GM12878 (cell line): ENCODE measurements at regions of chr3 and their contacts with region 1.

Region 1: DNA sequence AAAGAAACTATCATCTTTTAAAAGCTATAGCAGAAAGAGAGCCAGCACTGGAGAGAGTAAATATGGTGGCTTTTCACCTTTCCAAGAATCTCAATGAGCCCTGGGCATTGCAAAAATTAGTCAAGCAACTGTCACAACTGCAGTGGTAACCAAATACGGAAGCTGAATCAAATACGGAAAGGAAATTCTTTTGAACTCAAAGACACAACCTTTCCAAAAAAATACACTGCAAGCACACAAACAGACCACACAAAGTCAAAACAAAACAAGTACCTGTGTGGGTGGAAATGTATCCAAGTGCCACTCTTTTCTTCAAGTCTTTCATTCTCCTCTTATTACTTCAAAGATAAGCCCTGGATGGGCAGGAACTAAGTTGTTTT is 17.6 kb downstream of the VGLL4 start:
- DNase-seq: peak; percentile 72
- ATAC-seq: peak; percentile 84
- H3K4me3 ChIP-seq: peak overlapping the region; percentile 38; the same call in 1 of the 2 replicates
- H3K27ac ChIP-seq: peak overlapping the region; percentile 68; the same call in 1 of the 2 replicates
- H3K4me1 ChIP-seq: peaks cover 31% of the 10 kb centered on the region
- H3K27me3 ChIP-seq: no peaks in the 10 kb centered on the region
- CTCF ChIP-seq: no peak
- EP300 ChIP-seq: peak; percentile 69 to 84; a peak in 3 of 4 replicates
- POLR2A ChIP-seq: no peak
- RAD21 ChIP-seq: no peak

Region 2: DNA sequence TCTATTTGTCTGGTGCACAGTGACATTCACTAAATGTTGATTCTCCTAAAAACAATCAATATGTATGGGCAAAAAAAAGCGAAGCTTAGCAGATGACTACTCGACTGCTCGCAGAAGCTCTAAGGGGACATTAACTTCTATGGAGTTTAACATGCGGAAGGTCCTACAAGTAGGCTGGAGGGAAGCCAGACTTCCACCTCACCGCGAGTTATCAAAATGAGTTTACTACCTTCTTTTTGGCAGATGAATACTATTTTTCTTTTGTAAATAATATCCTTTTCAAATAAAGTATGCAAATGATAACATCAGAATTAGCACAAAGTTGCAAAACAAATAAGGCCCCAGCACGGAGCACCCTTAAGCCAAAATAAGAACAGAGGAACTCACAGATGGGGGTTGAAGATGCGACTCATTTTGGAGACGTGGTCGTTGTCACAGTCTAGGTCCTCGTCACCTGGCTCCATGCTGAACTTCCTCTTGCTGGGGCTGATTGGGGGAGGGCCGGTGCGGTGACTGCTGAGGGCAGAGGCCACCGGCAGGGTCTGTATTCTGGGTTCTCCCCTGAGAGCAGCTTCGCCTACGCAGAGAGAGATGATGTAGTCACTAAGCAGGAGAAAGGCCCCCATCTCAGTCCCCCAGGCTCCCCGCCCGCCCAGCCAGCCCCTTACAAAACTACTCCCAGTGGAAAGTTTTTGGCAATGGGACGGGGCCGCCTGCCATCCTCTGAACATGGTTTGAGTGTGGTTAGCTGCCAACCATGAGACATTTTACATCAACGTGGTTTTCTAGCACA is 24.4 kb before region 1 on chr3:
- CTCF ChIA-PET with region 1: interaction called, 5 read pairs
- POLR2A ChIA-PET with region 1: interaction called, 10 read pairs
- RAD21 ChIA-PET with region 1: interaction called, 8 read pairs
- SMC1A ChIA-PET with region 1: interaction called, 35 read pairs
- in situ Hi-C with region 1: no loop called
- intact Hi-C with region 1: loop called (anchors 2 kb)
- DNase-seq: peak; percentile 47
- ATAC-seq: peak; percentile 94
- H3K4me3 ChIP-seq: peak overlapping the region; percentile 16; the same call in 1 of the 2 replicates
- H3K27ac ChIP-seq: peak overlapping the region; percentile 56
- H3K4me1 ChIP-seq: peaks cover 14% of the 10 kb centered on the region
- H3K27me3 ChIP-seq: no peaks in the 10 kb centered on the region
- CTCF ChIP-seq: no peak
- EP300 ChIP-seq: peak; percentile 6 to 61; a peak in 2 of 4 replicates
- POLR2A ChIP-seq: peak; percentile 58
- RAD21 ChIP-seq: no peak

Region 3: GRCh38 chr3:11607816-11608215 is 18.3 kb before region 1 on chr3:
- CTCF ChIA-PET with region 1: no interaction called
- POLR2A ChIA-PET with region 1: interaction called, 10 read pairs
- RAD21 ChIA-PET with region 1: interaction called, 3 read pairs
- SMC1A ChIA-PET with region 1: interaction called, 35 read pairs
- in situ Hi-C with region 1: no loop called
- intact Hi-C with region 1: loop called (anchors 2 kb)
- DNase-seq: no peak
- ATAC-seq: no peak
- H3K4me3 ChIP-seq: no peak overlapping the region
- H3K27ac ChIP-seq: no peak overlapping the region
- H3K4me1 ChIP-seq: peaks cover 7% of the 10 kb centered on the region; the same call in 1 of the 2 replicates
- H3K27me3 ChIP-seq: no peaks in the 10 kb centered on the region
- CTCF ChIP-seq: no peak
- EP300 ChIP-seq: no peak
- POLR2A ChIP-seq: no peak
- RAD21 ChIP-seq: no peak

Region 4: GRCh38 chr3:11613851-11614487 is 12.1 kb before region 1 on chr3:
- CTCF ChIA-PET with region 1: interaction called, 4 read pairs
- POLR2A ChIA-PET with region 1: interaction called, 3 read pairs
- RAD21 ChIA-PET with region 1: no interaction called
- SMC1A ChIA-PET with region 1: interaction called, 26 read pairs
- in situ Hi-C with region 1: no loop called
- intact Hi-C with region 1: no loop called
- DNase-seq: no peak
- ATAC-seq: no peak
- H3K4me3 ChIP-seq: no peak overlapping the region
- H3K27ac ChIP-seq: no peak overlapping the region
- H3K4me1 ChIP-seq: no peaks in the 10 kb centered on the region
- H3K27me3 ChIP-seq: no peaks in the 10 kb centered on the region
- CTCF ChIP-seq: no peak
- EP300 ChIP-seq: no peak
- POLR2A ChIP-seq: no peak
- RAD21 ChIP-seq: no peak

Region 5: GRCh38 chr3:12017516-12017915 is 391.4 kb after region 1 on chr3:
- CTCF ChIA-PET with region 1: no interaction called
- POLR2A ChIA-PET with region 1: no interaction called
- RAD21 ChIA-PET with region 1: no interaction called
- SMC1A ChIA-PET with region 1: no interaction called
- in situ Hi-C with region 1: no loop called
- intact Hi-C with region 1: no loop called
- DNase-seq: no peak
- ATAC-seq: no peak
- H3K4me3 ChIP-seq: no peak overlapping the region
- H3K27ac ChIP-seq: no peak overlapping the region
- H3K4me1 ChIP-seq: no peaks in the 10 kb centered on the region
- H3K27me3 ChIP-seq: no peaks in the 10 kb centered on the region; a peak in 2 of 4 replicates
- CTCF ChIP-seq: no peak
- EP300 ChIP-seq: no peak
- POLR2A ChIP-seq: no peak
- RAD21 ChIP-seq: no peak